ENCODE measurements at regions of chr11 and their contacts with region 1.

Region 1: GRCh38 chr11:108467091-108467823 is at the start of gene C11orf65:
- DNase-seq: peak; percentile 96 to 98 (median 97)
- ATAC-seq: peak; percentile 100
- H3K4me3 ChIP-seq: peak within 1 kb of the TSS; percentile 29
- H3K4me1 ChIP-seq: peaks cover 3% of the 10 kb centered on the region
- CTCF ChIP-seq: no peak
- total RNA-seq, gene C11orf65: 0.31 to 1.3 (median 0.35) TPM

Region 2: GRCh38 chr11:108222686-108223448 is 244.4 kb before region 1 on chr11 and contains the start of gene ATM:
- intact Hi-C with region 1: loop called in 1 of 2 experiments (anchors 5 kb)
- DNase-seq: peak; percentile 99 to 100 (median 99)
- ATAC-seq: peak; percentile 95
- H3K4me3 ChIP-seq: peak within 1 kb of the TSS; percentile 46
- H3K4me1 ChIP-seq: peaks cover 13% of the 10 kb centered on the region
- CTCF ChIP-seq: peak; percentile 87
- total RNA-seq, gene ATM: 30.5 to 56.8 (median 36.4) TPM

Region 3: GRCh38 chr11:108414958-108415357 is 52.3 kb before region 1 on chr11:
- intact Hi-C with region 1: no loop called
- DNase-seq: no peak
- ATAC-seq: no peak
- H3K4me3 ChIP-seq: no peak overlapping the region
- H3K4me1 ChIP-seq: no peaks in the 10 kb centered on the region
- CTCF ChIP-seq: no peak

Region 4: GRCh38 chr11:108497317-108498045 is 30.2 kb after region 1 on chr11:
- intact Hi-C with region 1: no loop called
- DNase-seq: peak; percentile 82 to 89 (median 85)
- ATAC-seq: peak; percentile 95
- H3K4me3 ChIP-seq: peak overlapping the region; percentile 48
- H3K4me1 ChIP-seq: peaks cover 10% of the 10 kb centered on the region
- CTCF ChIP-seq: no peak

Region 5: DNA sequence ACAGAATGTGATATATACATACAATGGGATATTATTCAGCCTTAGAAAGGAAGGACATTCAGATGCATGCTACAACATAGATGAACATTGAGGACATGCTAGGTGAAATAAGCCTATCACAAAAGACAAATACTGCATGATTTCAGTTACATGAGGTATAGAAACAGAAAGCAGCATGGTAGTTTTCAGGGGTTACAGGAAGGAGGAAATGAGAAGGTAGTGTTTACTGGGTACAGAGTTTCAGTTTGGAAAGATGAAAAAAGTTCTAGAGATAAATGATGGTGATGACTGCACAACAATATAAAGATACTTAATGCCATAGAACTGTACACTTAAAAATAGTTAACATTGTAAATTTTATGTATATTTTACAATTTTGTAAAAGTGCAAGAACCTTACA is 688.0 kb after region 1 on chr11:
- intact Hi-C with region 1: no loop called
- DNase-seq: no peak
- ATAC-seq: no peak
- H3K4me3 ChIP-seq: no peak overlapping the region
- H3K4me1 ChIP-seq: no peaks in the 10 kb centered on the region
- CTCF ChIP-seq: no peak